ENCODE measurements at regions of chr9 and their contacts with region 1.

Region 1: DNA sequence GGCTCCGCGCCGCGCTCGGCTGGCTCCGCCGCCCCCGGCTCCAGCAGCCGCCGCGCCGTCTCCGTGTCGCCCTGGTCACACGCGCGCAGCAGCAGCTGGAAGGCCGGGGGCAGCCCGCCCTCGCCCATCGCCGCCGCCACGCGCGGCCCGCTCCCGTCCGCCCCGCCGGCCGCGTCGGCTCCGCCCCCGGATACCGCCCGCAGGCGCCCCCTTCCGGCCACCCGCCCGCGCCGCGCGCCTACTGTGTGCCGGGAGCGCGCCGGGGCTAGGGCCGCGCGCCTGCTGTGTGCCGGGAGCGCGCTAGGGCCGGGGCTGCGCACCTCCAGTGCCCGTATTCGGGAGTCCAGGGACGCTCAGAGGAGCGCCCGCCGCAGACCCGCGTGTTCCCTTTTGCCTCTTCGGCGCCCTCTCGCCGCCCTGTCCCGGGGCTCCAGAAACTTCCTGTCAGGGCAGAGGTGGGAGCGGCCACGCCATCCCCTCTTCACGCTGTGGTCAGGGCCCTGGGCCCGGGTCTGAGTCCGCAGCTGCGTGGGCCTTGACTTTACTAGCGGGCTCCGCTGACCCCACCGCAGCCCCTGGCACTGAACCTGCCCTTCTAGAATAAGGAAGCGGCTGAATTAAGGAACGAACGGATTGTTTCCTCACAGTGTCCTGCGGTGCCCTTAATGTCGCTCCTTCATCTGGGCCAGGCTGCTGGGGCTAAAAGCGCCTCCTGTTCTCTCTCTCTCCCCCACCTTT is at the start of gene ANKS6:
- DNase-seq: peak in 1 of 2 experiments; percentile 87
- H3K4me3 ChIP-seq: peak within 1 kb of the TSS; percentile 64
- H3K27ac ChIP-seq: no peak within 1 kb of the TSS
- H3K4me1 ChIP-seq: peaks cover 44% of the 10 kb centered on the region
- H3K27me3 ChIP-seq: no peaks in the 10 kb centered on the region
- CTCF ChIP-seq: peak; percentile 49; the same call in 1 of the 2 replicates
- total RNA-seq, gene ANKS6: 74.7 and 87.7 TPM in 2 replicates

Region 2: GRCh38 chr9:98488571-98489312 is 307.8 kb before region 1 on chr9:
- CTCF ChIA-PET with region 1: no interaction called
- POLR2A ChIA-PET with region 1: no interaction called
- intact Hi-C with region 1: loop called (anchors 10 kb)
- DNase-seq: peak; percentile 63 to 94
- H3K4me3 ChIP-seq: no peak overlapping the region
- H3K27ac ChIP-seq: peak overlapping the region; percentile 57
- H3K4me1 ChIP-seq: peaks cover 60% of the 10 kb centered on the region
- H3K27me3 ChIP-seq: no peaks in the 10 kb centered on the region
- CTCF ChIP-seq: no peak

Measured in PC-9 (cell line).